HCT116 (cell line): ENCODE measurements at regions of chr9 and their contacts with region 1.

Region 1: GRCh38 chr9:21576331-21577189 is 94.4 kb upstream of the IFNE start:
- DNase-seq: peak; percentile 93
- ATAC-seq: peak; percentile 76
- H3K4me3 ChIP-seq: peak overlapping the region in 1 of 2 experiments; percentile 8; a peak in 1 of 4 replicates
- H3K27ac ChIP-seq: peak overlapping the region; percentile 99
- H3K4me1 ChIP-seq: peaks cover 89 to 100% of the 10 kb centered on the region in 2 experiments
- H3K27me3 ChIP-seq: no peaks in the 10 kb centered on the region
- CTCF ChIP-seq: no peak
- POLR2A ChIP-seq: no peak
- RAD21 ChIP-seq: peak; percentile 33

Region 2: GRCh38 chr9:21334701-21335632 is 241.6 kb before region 1 on chr9 and contains the start of gene KLHL9:
- CTCF ChIA-PET with region 1: no interaction called
- POLR2A ChIA-PET with region 1: no interaction called
- RAD21 ChIA-PET with region 1: no interaction called
- intact Hi-C with region 1: loop called (anchors 5 kb)
- DNase-seq: peak; percentile 83
- ATAC-seq: peak; percentile 96
- H3K4me3 ChIP-seq: peak within 1 kb of the TSS; percentile 85 to 98
- H3K27ac ChIP-seq: peak within 1 kb of the TSS; percentile 82
- H3K4me1 ChIP-seq: peaks cover 3 to 23% of the 10 kb centered on the region in 2 experiments; a peak in 3 of 4 replicates
- H3K27me3 ChIP-seq: no peaks in the 10 kb centered on the region
- CTCF ChIP-seq: no peak
- POLR2A ChIP-seq: peak; percentile 46
- RAD21 ChIP-seq: no peak
- total RNA-seq, gene KLHL9: 16.4 TPM

Region 3: DNA sequence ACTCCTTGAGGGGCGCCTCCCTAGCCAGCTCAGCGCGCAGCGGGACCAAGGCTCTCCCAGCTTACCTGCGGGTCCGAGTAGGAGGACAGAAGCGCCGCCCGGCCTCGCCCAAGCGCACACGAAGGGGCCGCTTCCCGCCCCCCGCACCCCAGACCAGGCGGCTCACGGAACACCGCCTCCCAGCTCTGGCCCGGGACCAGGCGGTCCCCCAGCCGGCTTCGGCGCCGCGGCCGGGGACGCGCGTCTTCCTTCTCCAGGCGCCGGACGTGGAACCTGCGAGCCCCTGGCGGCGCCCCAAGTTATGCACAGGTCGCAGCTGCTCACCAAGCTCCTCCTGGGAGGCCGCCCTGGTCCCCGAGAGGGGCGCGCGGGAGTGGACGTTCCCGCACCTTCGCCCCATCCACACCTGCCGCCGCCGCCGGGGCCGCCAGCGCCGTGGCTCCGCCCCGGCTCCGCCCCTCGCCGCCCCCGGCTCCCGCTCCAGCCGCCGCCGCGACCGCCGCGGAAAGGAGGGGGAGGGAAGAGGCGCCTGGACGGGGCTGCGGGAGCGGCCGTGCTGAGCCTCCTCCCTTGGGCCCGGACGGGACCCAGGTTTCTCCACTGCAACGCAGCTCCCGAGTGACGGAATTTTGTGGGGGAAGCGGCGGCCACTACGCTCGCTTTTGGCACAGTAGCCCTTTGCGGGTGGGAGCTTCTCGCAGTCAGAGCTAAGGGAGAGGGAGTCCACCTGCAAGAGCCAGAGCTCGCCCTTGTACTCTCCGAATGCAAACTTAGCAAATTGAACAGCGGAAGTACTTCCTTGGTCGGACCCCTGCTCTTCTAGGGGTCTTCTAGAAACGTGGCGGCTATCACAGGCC is 16.9 kb before region 1 on chr9:
- CTCF ChIA-PET with region 1: no interaction called
- POLR2A ChIA-PET with region 1: interaction called, 31 read pairs
- RAD21 ChIA-PET with region 1: no interaction called
- intact Hi-C with region 1: no loop called
- DNase-seq: no peak
- ATAC-seq: peak; percentile 86
- H3K4me3 ChIP-seq: peak overlapping the region; percentile 65 to 72
- H3K27ac ChIP-seq: peak overlapping the region; percentile 99
- H3K4me1 ChIP-seq: peaks cover 59 to 83% of the 10 kb centered on the region in 2 experiments
- H3K27me3 ChIP-seq: no peaks in the 10 kb centered on the region
- CTCF ChIP-seq: 0 out of 6 replicates have a peak, but pooled peaks of 1 of the 3 experiments have one; percentile 2
- POLR2A ChIP-seq: no peak
- RAD21 ChIP-seq: peak; percentile 33; the same call in 1 of the 2 replicates

Region 4: GRCh38 chr9:21565155-21565554 is 11.4 kb before region 1 on chr9:
- CTCF ChIA-PET with region 1: interaction called, 4 read pairs
- POLR2A ChIA-PET with region 1: interaction called, 31 read pairs
- RAD21 ChIA-PET with region 1: no interaction called
- intact Hi-C with region 1: no loop called
- DNase-seq: peak; percentile 81
- ATAC-seq: peak; percentile 69
- H3K4me3 ChIP-seq: peak overlapping the region in 1 of 2 experiments; percentile 21; a peak in 2 of 4 replicates
- H3K27ac ChIP-seq: peak overlapping the region; percentile 99
- H3K4me1 ChIP-seq: peaks cover 95 to 98% of the 10 kb centered on the region in 2 experiments
- H3K27me3 ChIP-seq: no peaks in the 10 kb centered on the region
- CTCF ChIP-seq: no peak
- POLR2A ChIP-seq: no peak
- RAD21 ChIP-seq: no peak

Region 5: DNA sequence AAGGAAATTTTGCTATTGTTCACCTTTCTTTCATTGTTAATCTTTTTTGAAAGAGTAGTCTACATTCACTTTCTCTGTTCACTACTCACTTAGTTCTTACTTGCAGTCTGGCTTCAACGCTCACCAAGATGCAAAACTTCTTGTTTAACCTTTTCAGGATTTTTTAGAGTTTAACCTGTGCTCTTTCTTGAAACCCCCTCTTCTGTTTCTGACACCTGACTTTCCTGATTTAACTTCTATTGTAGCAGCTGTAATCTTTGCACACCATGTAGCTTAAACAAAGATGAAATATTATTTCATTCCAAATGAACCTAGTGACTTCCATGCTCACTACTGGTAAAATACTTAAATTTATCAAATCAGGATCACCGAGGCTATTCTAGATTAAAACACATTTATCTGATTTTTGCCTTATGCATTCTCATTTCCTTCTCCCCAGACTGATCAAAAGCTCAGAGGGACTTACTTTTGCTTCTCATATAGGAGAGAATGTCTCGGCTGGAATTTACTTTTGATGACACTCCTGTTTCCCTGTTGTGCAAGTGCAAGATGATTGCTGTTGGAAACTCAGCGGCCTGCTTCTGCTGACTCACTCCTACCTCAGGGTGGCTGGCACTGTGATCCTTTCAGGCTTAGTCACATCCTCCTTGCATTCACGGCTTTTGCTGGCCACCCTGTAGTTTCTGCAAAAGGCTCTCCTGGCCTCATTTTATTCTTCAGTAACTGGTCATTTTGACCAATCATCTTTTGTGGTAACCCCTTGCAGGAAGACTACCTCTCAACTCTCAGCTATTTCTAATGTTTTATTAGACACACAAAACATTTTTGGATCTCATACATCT is 14.9 kb after region 1 on chr9:
- CTCF ChIA-PET with region 1: no interaction called
- POLR2A ChIA-PET with region 1: interaction called, 14 read pairs
- RAD21 ChIA-PET with region 1: no interaction called
- intact Hi-C with region 1: no loop called
- DNase-seq: peak; percentile 94
- ATAC-seq: peak; percentile 82
- H3K4me3 ChIP-seq: peak overlapping the region; percentile 51 to 66
- H3K27ac ChIP-seq: peak overlapping the region; percentile 99
- H3K4me1 ChIP-seq: peaks cover 64 to 98% of the 10 kb centered on the region in 2 experiments
- H3K27me3 ChIP-seq: no peaks in the 10 kb centered on the region
- CTCF ChIP-seq: no peak
- POLR2A ChIP-seq: no peak
- RAD21 ChIP-seq: peak; percentile 43; the same call in 1 of the 2 replicates

Region 6: GRCh38 chr9:21802195-21803000 is 225.8 kb after region 1 on chr9 and contains the start of gene MTAP:
- CTCF ChIA-PET with region 1: no interaction called
- POLR2A ChIA-PET with region 1: interaction called, 3 read pairs
- RAD21 ChIA-PET with region 1: no interaction called
- intact Hi-C with region 1: loop called (anchors 1 kb)
- DNase-seq: peak; percentile 91
- ATAC-seq: peak; percentile 90
- H3K4me3 ChIP-seq: peak within 1 kb of the TSS; percentile 57 to 95
- H3K27ac ChIP-seq: peak within 1 kb of the TSS; percentile 98
- H3K4me1 ChIP-seq: peaks cover 38 to 57% of the 10 kb centered on the region in 2 experiments
- H3K27me3 ChIP-seq: no peaks in the 10 kb centered on the region
- CTCF ChIP-seq: no peak
- POLR2A ChIP-seq: peak; percentile 76
- RAD21 ChIP-seq: no peak
- total RNA-seq, gene MTAP: 326 TPM